ENCODE measurements at regions of chr2 and their contacts with region 1.

Region 1: DNA sequence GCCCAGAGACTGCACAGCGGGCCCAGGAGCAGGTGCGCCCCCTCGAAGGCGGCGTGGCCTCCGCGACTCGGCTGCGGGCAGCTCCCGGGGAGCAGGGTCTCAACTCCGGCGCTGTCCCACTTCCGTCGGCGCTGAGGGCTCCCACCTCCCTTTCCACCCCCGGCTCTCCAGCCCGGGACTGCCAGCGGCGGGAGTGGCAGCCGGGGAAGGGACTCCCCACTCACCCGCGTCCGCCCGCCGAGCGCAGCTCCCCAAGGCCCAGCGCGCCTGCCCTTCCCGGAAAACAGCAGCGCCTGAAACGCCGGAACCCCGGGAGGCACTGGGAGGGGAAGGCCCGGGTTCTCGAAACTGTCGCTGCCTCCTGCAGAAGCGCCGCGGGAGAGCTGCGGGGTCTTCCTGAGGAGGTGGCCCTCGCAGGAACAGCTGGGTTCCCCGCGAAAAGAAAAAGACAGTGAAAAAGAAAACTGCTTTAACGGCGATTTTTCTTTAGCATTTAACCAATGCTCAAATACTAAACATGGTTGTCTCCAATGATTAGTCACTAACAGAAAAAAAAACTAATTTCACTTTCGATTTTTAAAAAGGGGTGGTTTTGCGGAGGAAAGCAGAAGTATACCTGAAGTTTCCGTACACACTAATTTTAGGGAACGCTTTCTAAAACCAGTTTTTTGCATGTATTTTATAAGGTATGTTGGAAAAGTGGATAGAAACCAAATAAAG is at the start of gene NMI:
- DNase-seq: peak; percentile 82
- H3K4me3 ChIP-seq: peak within 1 kb of the TSS; percentile 70
- H3K27ac ChIP-seq: peak within 1 kb of the TSS; percentile 99
- H3K4me1 ChIP-seq: no peaks in the 10 kb centered on the region
- H3K27me3 ChIP-seq: no peaks in the 10 kb centered on the region
- CTCF ChIP-seq: no peak
- total RNA-seq, gene NMI: 18.4 to 21.1 TPM

Region 2: GRCh38 chr2:151409601-151410484 is 120.3 kb after region 1 on chr2 and contains the start of gene RIF1:
- intact Hi-C with region 1: loop called (anchors 5 kb)
- DNase-seq: peak; percentile 91
- H3K4me3 ChIP-seq: peak within 1 kb of the TSS; percentile 90
- H3K27ac ChIP-seq: peak within 1 kb of the TSS; percentile 70
- H3K4me1 ChIP-seq: no peaks in the 10 kb centered on the region
- H3K27me3 ChIP-seq: no peaks in the 10 kb centered on the region
- CTCF ChIP-seq: peak; percentile 62
- total RNA-seq, gene RIF1: 27.8 to 34.2 TPM

Region 3: DNA sequence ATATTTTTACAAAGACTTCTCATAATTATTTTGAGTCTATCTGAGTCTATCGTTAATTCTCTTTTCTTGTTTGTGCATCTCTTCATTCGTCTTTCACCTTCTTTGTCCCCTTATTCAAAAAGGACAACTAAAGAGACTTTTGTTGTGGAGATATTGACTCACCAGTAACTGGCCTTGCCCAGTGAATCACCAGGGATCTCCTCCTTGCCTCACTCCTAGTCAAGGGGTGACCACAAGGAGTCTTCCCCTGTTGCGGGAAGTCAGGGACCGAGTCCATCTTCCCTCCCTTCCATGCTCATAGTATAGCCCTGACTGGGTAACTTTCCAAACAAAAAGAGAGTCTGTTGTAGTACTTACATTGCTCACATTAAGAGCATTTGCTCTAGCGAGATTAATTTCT is 285.8 kb after region 1 on chr2:
- intact Hi-C with region 1: no loop called
- DNase-seq: no peak
- H3K4me3 ChIP-seq: no peak overlapping the region
- H3K27ac ChIP-seq: no peak overlapping the region
- H3K4me1 ChIP-seq: no peaks in the 10 kb centered on the region
- H3K27me3 ChIP-seq: no peaks in the 10 kb centered on the region
- CTCF ChIP-seq: no peak